ENCODE measurements at regions of chr3 and their contacts with region 1.

Region 1: DNA sequence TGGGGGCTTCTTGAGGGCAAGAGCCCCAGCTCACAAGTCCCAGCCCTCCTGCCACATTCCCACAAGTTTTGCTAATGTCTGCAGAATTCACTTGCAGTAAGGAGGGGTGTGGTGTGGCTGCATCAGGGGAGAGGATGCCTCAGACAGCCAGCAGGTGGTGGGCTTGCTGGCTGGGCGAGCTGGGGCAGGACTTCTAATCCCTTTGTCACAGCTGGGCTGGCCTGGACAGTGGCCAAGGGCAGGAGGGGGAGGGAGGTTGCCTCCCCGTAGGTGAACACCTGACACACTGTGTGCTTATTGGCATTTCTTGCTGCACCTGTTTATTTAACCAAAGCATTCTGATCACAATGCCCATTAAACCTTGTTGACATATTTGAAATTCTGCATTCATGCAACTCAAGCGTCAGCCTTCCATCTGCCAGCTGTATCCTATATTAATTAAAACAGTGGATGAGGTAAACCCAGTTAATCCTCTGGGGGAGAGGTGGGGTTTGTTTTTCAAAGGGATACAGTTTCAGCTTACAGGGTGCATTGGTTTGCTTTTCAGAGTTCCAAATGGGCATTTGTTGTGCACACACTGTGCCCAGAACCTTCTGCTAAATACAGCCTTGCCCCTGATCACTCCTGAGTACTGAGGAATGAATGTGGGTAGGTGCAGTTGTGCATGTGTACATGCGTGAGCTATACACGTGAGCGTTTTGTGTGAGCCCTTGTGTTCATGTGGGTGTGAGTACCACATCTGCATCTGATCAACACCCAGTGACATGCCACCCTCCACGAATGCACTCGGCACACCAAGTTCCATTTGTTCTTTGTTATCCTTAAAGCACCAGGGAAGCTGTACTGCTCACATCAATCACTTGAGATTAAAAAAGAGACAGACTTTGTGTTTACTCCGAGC is 268.7 kb downstream of the XXYLT1 start:
- DNase-seq: peak; percentile 29
- H3K4me3 Mint-ChIP-seq: no peak overlapping the region
- H3K27ac Mint-ChIP-seq: no peak overlapping the region
- H3K4me1 Mint-ChIP-seq: no peaks in the 10 kb centered on the region
- H3K27me3 Mint-ChIP-seq: no peaks in the 10 kb centered on the region

Region 2: DNA sequence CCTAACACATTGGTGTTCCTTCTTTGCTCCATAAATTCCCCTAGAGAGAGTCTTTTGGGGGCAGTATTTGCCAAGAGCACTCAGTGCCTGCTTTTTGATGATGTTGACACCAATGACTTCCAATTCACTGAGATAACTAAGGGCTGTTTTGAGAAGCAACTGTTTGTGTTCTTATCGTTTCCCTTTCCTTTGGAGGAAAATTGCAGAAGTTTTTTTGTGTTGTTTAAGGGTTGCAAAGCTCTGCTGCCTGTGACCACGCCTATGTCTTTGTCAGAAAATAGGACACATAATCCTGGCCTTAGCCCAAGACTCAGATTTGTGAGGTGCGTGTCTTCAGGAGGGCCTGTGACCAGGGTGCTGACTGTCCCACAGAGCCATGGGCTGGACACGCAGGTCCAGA is 216.9 kb before region 1 on chr3:
- CTCF ChIA-PET with region 1: no interaction called
- intact Hi-C with region 1: no loop called
- DNase-seq: no peak
- H3K4me3 Mint-ChIP-seq: no peak overlapping the region
- H3K27ac Mint-ChIP-seq: no peak overlapping the region
- H3K4me1 Mint-ChIP-seq: no peaks in the 10 kb centered on the region
- H3K27me3 Mint-ChIP-seq: peaks cover 2% of the 10 kb centered on the region

Region 3: DNA sequence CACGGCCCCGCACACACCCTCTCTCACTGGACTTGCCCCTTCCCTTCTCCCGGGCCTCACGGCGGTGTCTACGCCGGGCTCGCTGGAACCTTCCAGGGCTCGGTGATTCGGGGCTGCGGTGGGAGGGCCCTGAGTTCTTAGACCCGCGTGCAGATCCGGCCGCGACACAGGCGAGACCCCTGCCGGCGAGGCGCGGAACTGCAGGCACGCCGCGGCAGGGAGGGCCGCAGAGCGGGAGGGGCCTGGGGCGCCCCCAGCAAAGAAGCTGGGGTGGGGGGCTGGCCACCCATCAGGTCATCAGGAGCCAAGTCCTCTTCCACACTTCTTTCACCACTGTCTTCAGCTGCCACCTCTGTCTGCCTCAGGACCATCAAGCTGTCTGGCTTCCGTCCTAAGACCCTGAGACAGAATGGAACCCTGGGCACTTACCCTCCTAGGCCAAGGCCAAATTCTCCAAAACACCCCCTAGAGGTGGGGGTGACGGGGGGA is 104.3 kb after region 1 on chr3:
- CTCF ChIA-PET with region 1: no interaction called
- intact Hi-C with region 1: loop called (anchors 1 kb)
- DNase-seq: peak; percentile 63
- H3K4me3 Mint-ChIP-seq: peak overlapping the region; percentile 22
- H3K27ac Mint-ChIP-seq: no peak overlapping the region
- H3K4me1 Mint-ChIP-seq: no peaks in the 10 kb centered on the region
- H3K27me3 Mint-ChIP-seq: no peaks in the 10 kb centered on the region

Region 4: GRCh38 chr3:195139091-195139839 is 137.1 kb after region 1 on chr3:
- CTCF ChIA-PET with region 1: no interaction called
- intact Hi-C with region 1: no loop called
- DNase-seq: no peak
- H3K4me3 Mint-ChIP-seq: no peak overlapping the region
- H3K27ac Mint-ChIP-seq: no peak overlapping the region
- H3K4me1 Mint-ChIP-seq: no peaks in the 10 kb centered on the region
- H3K27me3 Mint-ChIP-seq: no peaks in the 10 kb centered on the region